Heart left ventricle (tissue), 16 donors: ENCODE measurements at regions of chr19 and their contacts with region 1.

Region 1: GRCh38 chr19:1825909-1826556 is 14.0 kb upstream of the ATP8B3 start:
- DNase-seq: peak; percentile 69 to 87 (median 76)
- ATAC-seq: peak; percentile 38 to 82 (median 76)
- H3K4me3 ChIP-seq: no peak overlapping the region
- H3K27ac ChIP-seq: no peak overlapping the region
- H3K4me1 ChIP-seq: peaks cover 0 to 14% (median 4%) of the 10 kb centered on the region in 12 donors
- H3K27me3 ChIP-seq: no peaks in the 10 kb centered on the region
- CTCF ChIP-seq: peak; percentile 81 to 88 (median 85)
- POLR2A ChIP-seq: no peak

Region 2: GRCh38 chr19:1540365-1540925 is 285.6 kb before region 1 on chr19:
- intact Hi-C with region 1: loop called in 1 of 10 experiments (anchors 10 kb)
- DNase-seq: no peak
- ATAC-seq: peak in 2 of 4 donors; percentile 64 to 71
- H3K4me3 ChIP-seq: no peak overlapping the region
- H3K27ac ChIP-seq: peak overlapping the region in 2 of 12 donors; percentile 17 to 49
- H3K4me1 ChIP-seq: peaks cover 0 to 20% (median 3%) of the 10 kb centered on the region in 12 donors
- H3K27me3 ChIP-seq: peaks cover 0 to 31% (median 1%) of the 10 kb centered on the region in 9 donors
- CTCF ChIP-seq: no peak
- POLR2A ChIP-seq: no peak

Region 3: DNA sequence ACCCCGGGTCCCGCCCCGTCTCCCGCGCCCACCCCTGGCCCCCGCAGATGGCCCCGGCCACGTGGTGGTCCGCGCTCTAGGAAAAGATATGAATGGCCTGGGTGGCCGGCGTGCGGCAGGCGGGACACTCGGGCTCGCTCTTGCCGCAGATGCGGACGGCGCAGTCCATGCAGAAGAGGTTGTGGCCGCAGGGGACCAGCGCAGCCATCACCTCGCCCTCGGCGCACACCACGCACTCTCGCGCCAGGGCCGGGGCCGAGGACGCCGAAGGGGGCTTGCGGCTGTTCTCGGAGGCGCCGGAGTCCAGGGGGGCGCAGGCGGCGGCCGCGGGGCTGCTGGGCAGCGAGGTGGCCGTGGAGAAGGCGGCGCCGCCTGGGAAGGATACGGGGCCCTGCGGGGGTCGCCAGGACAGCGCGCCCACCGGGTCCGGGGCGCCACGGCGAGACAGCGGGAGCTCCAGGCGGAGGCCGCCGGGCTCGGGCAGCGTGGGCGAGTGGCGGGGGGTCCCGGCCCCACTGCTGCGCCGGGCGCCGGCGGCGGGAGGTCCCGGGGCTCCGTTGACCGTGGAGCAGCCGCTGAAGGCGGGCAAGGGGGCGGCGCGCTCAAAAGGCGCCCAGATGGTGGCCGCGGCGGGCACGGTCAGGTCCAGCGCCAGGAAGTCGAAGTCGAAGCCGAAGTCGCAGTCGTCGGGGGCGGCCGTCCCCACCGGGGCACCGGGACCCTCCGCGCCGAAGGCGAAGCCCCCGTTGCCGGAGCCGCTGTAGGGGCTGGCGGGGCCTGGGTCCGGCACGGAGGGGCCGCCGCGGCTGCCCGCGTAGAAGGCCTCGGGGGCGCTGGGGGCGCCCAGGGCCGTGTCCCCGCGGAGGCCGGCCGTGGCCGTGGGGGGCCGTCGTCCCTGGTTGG is 270.3 kb before region 1 on chr19:
- intact Hi-C with region 1: loop called in 1 of 10 experiments (anchors 10 kb)
- DNase-seq: no peak
- ATAC-seq: no peak
- H3K4me3 ChIP-seq: no peak overlapping the region
- H3K27ac ChIP-seq: no peak overlapping the region
- H3K4me1 ChIP-seq: peaks cover 0 to 9% (median 0%) of the 10 kb centered on the region in 12 donors
- H3K27me3 ChIP-seq: no peaks in the 10 kb centered on the region
- CTCF ChIP-seq: no peak
- POLR2A ChIP-seq: no peak

Region 4: GRCh38 chr19:1789261-1790041 is 36.6 kb before region 1 on chr19:
- intact Hi-C with region 1: loop called in 2 of 10 experiments (anchors 5 kb)
- DNase-seq: no peak
- ATAC-seq: peak in 2 of 4 donors; percentile 31 to 53
- H3K4me3 ChIP-seq: peak overlapping the region in 10 of 12 donors; percentile 9 to 46 (median 29)
- H3K27ac ChIP-seq: peak overlapping the region in 1 of 12 donors; percentile 22
- H3K4me1 ChIP-seq: peaks cover 0 to 14% (median 0%) of the 10 kb centered on the region in 12 donors
- H3K27me3 ChIP-seq: peaks cover 4 to 48% (median 21%) of the 10 kb centered on the region in 9 donors
- CTCF ChIP-seq: no peak
- POLR2A ChIP-seq: no peak